Right lobe of liver (tissue), 6 donors: ENCODE measurements at regions of chr20 and their contacts with region 1.

Region 1: GRCh38 chr20:21808863-21809664 is 103.6 kb downstream of the PAX1 start:
- DNase-seq: peak; percentile 54 to 66 (median 55)
- ATAC-seq: peak; percentile 53 to 63 (median 56)
- H3K4me3 ChIP-seq: no peak overlapping the region
- H3K27ac ChIP-seq: no peak overlapping the region
- H3K4me1 ChIP-seq: no peaks in the 10 kb centered on the region
- H3K27me3 ChIP-seq: no peaks in the 10 kb centered on the region
- CTCF ChIP-seq: peak; percentile 61 to 84 (median 80)
- POLR2A ChIP-seq: no peak

Region 2: GRCh38 chr20:22052025-22052650 is 243.1 kb after region 1 on chr20:
- intact Hi-C with region 1: no loop called
- DNase-seq: no peak
- ATAC-seq: no peak
- H3K4me3 ChIP-seq: no peak overlapping the region
- H3K27ac ChIP-seq: no peak overlapping the region
- H3K4me1 ChIP-seq: no peaks in the 10 kb centered on the region
- H3K27me3 ChIP-seq: no peaks in the 10 kb centered on the region
- CTCF ChIP-seq: no peak
- POLR2A ChIP-seq: no peak

Region 3: DNA sequence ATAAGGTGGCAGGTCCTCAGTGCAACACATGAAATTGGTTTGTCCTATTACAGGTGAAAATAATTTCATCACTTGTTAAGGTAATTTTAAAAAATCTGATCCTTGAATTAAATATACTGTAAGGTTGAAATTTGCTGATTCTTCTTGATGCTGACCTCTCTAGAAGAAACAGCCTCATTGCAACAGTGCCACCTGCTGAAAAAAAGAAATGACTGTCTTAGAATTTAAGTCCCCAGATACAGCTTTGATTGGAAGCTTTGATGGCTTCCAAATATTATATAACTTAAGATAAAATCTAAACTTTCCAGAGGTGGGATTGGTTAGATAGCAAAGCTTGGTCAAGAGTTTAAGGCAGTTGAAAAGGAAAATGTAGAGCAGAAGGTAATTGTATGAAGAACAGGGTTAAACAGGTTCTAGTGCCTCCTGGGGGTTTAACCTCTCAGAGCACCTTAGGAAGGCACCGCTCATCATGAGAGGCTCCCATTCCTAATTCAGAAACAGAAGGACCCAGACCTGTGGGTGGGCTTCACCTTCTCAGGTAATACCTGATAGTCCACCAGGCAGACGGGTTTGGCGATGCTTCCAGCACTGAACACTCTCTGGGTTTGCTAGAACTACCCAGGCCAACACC is 297.4 kb after region 1 on chr20:
- intact Hi-C with region 1: loop called (anchors 10 kb)
- DNase-seq: no peak
- ATAC-seq: peak; percentile 58 to 72 (median 62)
- H3K4me3 ChIP-seq: no peak overlapping the region
- H3K27ac ChIP-seq: no peak overlapping the region
- H3K4me1 ChIP-seq: no peaks in the 10 kb centered on the region
- H3K27me3 ChIP-seq: no peaks in the 10 kb centered on the region
- CTCF ChIP-seq: peak; percentile 55 to 63 (median 58)
- POLR2A ChIP-seq: no peak